RWPE1 (cell line): ENCODE measurements at regions of chr17 and their contacts with region 1.

Region 1: DNA sequence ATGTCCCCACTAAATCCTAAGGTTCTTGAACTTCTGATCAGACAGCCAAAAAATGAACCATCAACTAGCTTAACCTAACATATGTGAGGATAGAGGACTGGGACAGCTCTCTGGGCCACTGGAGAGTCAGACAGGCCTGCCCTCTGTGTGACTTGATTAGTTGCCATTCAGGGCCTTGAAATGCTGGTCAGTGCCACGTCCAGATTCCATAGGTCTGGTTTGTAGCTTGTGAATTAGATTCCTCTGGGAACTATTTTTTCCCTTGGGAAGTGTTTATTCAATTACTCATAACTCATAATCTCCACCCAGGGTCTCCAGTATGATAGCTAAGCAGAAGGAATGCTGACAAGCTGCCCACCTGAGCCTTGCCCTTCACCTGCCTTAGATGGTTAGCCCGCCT is 48.2 kb downstream of the IGF2BP1 start:
- DNase-seq: no peak
- H3K27ac ChIP-seq: no peak overlapping the region
- CTCF ChIP-seq: no peak

Region 2: GRCh38 chr17:49003290-49003622 is 42.1 kb before region 1 on chr17:
- CTCF ChIA-PET with region 1: interaction called, 10 read pairs
- POLR2A ChIA-PET with region 1: no interaction called
- DNase-seq: no peak
- H3K27ac ChIP-seq: no peak overlapping the region
- CTCF ChIP-seq: no peak

Region 3: DNA sequence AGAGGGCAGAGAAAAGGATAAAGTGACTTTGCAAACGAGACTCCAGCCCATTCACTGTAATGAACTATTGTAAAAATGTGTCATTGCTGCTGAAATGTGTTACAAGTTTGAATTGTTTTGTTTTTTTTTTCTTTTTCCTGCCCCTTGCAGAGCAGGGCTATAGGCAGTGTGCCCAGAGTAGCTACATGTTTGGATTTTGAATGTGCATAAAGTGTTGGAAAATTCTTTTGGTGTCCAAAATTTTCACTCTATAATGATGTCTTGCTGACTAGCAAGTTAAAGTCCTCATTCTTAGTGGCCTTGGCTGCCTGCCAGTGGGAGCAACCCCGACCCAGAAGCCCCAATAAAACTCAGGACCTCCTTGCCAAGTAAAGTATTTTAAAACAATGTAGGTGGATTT is 18.3 kb after region 1 on chr17:
- CTCF ChIA-PET with region 1: no interaction called
- POLR2A ChIA-PET with region 1: no interaction called
- DNase-seq: no peak
- H3K27ac ChIP-seq: no peak overlapping the region
- CTCF ChIP-seq: no peak